ENCODE measurements at regions of chr5 and their contacts with region 1.

Region 1: GRCh38 chr5:96752341-96753016 is 55.3 kb downstream of the ERAP1 start:
- DNase-seq: peak in 1 of 2 experiments; percentile 71
- H3K4me3 ChIP-seq: no peak overlapping the region
- H3K4me3 Mint-ChIP-seq: no peak overlapping the region
- H3K27ac Mint-ChIP-seq: no peak overlapping the region
- H3K4me1 ChIP-seq: no peaks in the 10 kb centered on the region
- H3K4me1 Mint-ChIP-seq: no peaks in the 10 kb centered on the region
- H3K27me3 ChIP-seq: no peaks in the 10 kb centered on the region
- H3K27me3 Mint-ChIP-seq: no peaks in the 10 kb centered on the region
- CTCF ChIP-seq: peak; percentile 61 to 70

Region 2: DNA sequence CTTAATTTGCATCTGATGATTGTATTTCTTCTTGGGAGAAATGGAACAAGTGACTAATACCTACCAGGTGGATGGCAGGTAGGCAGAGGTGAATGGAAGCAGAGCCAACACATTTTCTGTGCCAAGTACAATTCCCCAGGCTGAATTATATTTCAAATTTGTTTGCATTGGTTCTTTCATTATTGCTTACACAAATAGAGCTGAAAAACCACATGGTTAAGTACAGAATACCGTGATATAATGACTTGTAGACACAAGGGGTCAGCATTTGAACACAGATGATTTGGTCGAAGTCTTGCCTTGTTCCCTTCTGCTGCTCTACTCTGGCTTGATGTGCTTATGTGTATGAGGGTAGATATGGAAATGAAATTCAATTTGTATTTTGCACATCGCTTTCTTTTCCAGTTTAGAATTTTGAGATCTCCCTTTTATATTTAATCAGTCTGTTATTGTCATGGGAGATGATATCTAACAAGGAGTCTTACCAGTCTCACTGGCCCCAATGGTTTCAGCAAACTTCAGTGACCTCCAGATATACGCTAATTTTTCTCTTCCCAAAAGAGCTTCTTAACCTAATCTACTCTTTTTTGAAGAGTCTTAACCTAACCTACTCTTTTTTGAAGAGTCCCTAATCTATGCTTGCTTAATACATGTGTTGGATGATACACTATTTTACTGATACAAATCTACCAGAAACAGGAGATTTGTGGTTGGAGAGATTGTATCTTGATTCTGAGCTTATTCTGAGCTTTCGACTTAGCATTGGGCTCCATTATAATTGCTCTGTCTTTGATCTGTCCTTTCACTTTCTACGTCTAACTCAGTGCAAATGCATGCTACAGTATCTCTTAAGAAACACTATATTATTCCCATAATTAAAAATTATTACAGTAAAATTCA is 407.6 kb before region 1 on chr5:
- CTCF ChIA-PET with region 1: no interaction called
- POLR2A ChIA-PET with region 1: no interaction called
- intact Hi-C with region 1: loop called (anchors 10 kb)
- DNase-seq: peak in 1 of 2 experiments; percentile 60
- H3K4me3 ChIP-seq: no peak overlapping the region
- H3K4me3 Mint-ChIP-seq: no peak overlapping the region
- H3K27ac Mint-ChIP-seq: no peak overlapping the region
- H3K4me1 ChIP-seq: peaks cover 8% of the 10 kb centered on the region
- H3K4me1 Mint-ChIP-seq: no peaks in the 10 kb centered on the region
- H3K27me3 ChIP-seq: no peaks in the 10 kb centered on the region
- H3K27me3 Mint-ChIP-seq: no peaks in the 10 kb centered on the region
- CTCF ChIP-seq: peak; percentile 52 to 57

Region 3: GRCh38 chr5:96662725-96663513 is 89.6 kb before region 1 on chr5:
- CTCF ChIA-PET with region 1: interaction called, 10 read pairs
- POLR2A ChIA-PET with region 1: no interaction called
- intact Hi-C with region 1: no loop called
- DNase-seq: peak; percentile 89 to 93
- H3K4me3 ChIP-seq: peak overlapping the region; percentile 90
- H3K4me3 Mint-ChIP-seq: peak overlapping the region; percentile 81
- H3K27ac Mint-ChIP-seq: peak overlapping the region; percentile 86
- H3K4me1 ChIP-seq: peaks cover 45% of the 10 kb centered on the region
- H3K4me1 Mint-ChIP-seq: peaks cover 34% of the 10 kb centered on the region
- H3K27me3 ChIP-seq: no peaks in the 10 kb centered on the region
- H3K27me3 Mint-ChIP-seq: no peaks in the 10 kb centered on the region
- CTCF ChIP-seq: peak in 1 of 2 experiments; percentile 3

Region 4: DNA sequence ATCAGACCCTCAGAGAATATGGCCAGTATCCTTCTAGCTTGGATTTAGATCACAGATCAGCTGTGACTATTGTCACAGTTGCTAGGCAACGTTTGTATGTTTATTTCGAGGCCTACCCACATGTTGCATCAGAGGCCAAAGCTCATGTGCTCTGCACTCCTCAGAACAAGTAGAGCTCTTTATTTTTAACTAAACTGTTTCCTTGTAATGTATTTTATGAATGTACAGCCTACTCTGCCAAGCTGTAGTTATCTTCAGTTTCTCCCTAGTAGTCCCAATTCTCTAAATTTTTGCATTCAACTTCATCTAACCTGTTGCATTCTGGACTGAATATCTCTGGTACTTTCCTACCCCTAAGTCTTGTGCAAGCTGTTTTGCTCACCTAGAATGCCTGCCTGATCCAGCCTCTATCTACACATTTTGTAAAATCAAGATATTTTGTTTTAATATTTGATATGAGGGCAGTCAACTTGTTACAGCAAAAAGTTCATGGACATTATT is 37.5 kb before region 1 on chr5:
- CTCF ChIA-PET with region 1: interaction called, 12 read pairs
- POLR2A ChIA-PET with region 1: no interaction called
- intact Hi-C with region 1: no loop called
- DNase-seq: peak; percentile 72 to 83
- H3K4me3 ChIP-seq: no peak overlapping the region
- H3K4me3 Mint-ChIP-seq: peak overlapping the region; percentile 34
- H3K27ac Mint-ChIP-seq: peak overlapping the region; percentile 92
- H3K4me1 ChIP-seq: peaks cover 36% of the 10 kb centered on the region
- H3K4me1 Mint-ChIP-seq: peaks cover 53% of the 10 kb centered on the region
- H3K27me3 ChIP-seq: no peaks in the 10 kb centered on the region
- H3K27me3 Mint-ChIP-seq: no peaks in the 10 kb centered on the region
- CTCF ChIP-seq: no peak

Region 5: DNA sequence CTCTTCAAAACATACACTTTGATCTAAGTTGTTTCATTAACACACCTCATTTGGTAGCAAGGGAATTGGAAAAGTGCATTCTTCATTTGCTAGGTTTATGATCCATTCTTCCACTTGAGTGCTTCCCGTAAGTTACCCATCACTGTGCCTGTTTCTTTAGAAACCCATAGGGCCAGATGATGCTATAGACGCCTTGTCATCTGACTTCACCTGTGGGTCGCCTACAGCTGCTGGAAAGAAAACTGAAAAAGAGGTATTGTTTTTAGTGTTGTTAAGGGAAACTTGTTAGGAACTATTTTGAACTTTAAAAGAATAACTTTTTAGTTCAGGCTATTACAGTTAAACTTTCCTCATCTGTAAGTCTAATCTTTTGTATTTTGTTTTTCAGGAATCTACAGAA is 11.4 kb before region 1 on chr5:
- CTCF ChIA-PET with region 1: interaction called, 11 read pairs
- POLR2A ChIA-PET with region 1: no interaction called
- intact Hi-C with region 1: no loop called
- DNase-seq: no peak
- H3K4me3 ChIP-seq: no peak overlapping the region
- H3K4me3 Mint-ChIP-seq: no peak overlapping the region
- H3K27ac Mint-ChIP-seq: no peak overlapping the region
- H3K4me1 ChIP-seq: peaks cover 18% of the 10 kb centered on the region
- H3K4me1 Mint-ChIP-seq: peaks cover 25% of the 10 kb centered on the region
- H3K27me3 ChIP-seq: no peaks in the 10 kb centered on the region
- H3K27me3 Mint-ChIP-seq: no peaks in the 10 kb centered on the region
- CTCF ChIP-seq: no peak

Region 6: DNA sequence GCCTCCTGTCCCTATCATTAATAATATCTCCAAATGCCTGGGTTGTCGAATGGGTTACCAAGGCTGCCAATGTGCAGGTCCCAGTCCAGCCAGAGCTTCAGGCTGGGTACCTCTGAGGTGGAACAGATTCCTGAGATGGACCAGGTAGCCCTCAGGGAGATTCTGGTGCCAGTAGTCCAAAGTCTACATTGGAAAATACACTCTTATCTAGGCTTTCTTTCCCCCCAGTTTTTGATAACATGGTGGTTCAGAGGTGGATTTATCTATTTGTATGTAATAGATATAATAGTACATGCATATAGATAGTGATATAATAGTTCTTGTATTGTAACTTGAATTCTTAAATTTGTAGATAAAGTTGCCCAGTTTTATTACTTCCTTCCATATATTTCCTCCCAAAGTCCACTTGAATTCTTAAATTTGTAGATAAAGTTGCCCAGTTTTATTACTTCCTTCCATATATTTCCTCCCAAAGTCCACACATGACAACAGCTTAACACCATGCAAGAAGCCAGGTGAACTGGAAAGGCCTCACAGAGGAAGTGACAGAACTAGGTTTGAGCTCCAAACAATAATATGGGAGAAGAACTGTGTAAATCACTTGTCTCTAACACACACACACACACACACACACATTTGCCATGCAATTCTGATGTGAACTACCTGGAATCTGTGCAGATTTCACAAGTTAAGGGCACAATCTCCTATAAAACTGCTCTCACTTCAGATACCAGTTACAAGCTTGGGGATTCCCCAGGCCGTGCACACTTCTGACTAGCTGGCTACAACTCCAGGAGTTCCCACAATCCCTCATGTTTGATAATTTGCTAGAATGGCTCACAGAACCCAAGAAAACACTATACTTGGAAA is 86.0 kb after region 1 on chr5:
- CTCF ChIA-PET with region 1: no interaction called
- POLR2A ChIA-PET with region 1: no interaction called
- intact Hi-C with region 1: no loop called
- DNase-seq: no peak
- H3K4me3 ChIP-seq: no peak overlapping the region
- H3K4me3 Mint-ChIP-seq: no peak overlapping the region
- H3K27ac Mint-ChIP-seq: no peak overlapping the region
- H3K4me1 ChIP-seq: peaks cover 21% of the 10 kb centered on the region; the same call in 1 of the 2 replicates
- H3K4me1 Mint-ChIP-seq: no peaks in the 10 kb centered on the region
- H3K27me3 ChIP-seq: no peaks in the 10 kb centered on the region
- H3K27me3 Mint-ChIP-seq: no peaks in the 10 kb centered on the region
- CTCF ChIP-seq: no peak

Region 7: DNA sequence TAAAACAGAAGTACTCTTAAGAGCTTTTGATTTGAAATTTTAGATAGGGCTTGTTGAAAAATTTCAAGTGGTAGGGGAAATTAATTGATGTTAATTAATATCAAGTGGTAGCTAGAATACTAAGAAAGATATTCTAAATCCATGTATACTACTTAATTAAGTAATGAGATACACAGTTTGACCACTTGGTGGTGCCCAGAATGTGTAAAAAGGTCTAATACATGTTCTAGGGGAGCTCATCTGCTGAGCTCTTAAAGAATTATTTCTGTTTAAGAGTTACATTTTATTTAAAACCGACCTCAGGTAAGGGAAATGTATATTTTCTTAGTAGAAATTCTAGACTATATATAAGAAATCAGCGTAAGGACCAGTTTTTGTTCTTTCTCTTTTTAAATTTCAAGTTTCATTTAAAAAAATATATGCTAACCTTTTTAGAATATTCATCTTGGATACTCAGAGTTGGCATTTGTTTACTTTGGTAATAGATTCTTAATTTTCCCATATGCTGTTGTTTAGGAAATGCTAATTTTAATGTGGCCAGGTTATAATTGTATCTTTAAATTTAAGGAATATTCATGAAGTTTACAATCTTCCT is 244.9 kb after region 1 on chr5:
- CTCF ChIA-PET with region 1: no interaction called
- POLR2A ChIA-PET with region 1: no interaction called
- intact Hi-C with region 1: loop called (anchors 10 kb)
- DNase-seq: peak in 1 of 2 experiments; percentile 32
- H3K4me3 ChIP-seq: no peak overlapping the region
- H3K4me3 Mint-ChIP-seq: no peak overlapping the region
- H3K27ac Mint-ChIP-seq: no peak overlapping the region
- H3K4me1 ChIP-seq: peaks cover 4% of the 10 kb centered on the region
- H3K4me1 Mint-ChIP-seq: peaks cover 18% of the 10 kb centered on the region
- H3K27me3 ChIP-seq: no peaks in the 10 kb centered on the region
- H3K27me3 Mint-ChIP-seq: no peaks in the 10 kb centered on the region
- CTCF ChIP-seq: peak; percentile 47 to 49

Region 8: DNA sequence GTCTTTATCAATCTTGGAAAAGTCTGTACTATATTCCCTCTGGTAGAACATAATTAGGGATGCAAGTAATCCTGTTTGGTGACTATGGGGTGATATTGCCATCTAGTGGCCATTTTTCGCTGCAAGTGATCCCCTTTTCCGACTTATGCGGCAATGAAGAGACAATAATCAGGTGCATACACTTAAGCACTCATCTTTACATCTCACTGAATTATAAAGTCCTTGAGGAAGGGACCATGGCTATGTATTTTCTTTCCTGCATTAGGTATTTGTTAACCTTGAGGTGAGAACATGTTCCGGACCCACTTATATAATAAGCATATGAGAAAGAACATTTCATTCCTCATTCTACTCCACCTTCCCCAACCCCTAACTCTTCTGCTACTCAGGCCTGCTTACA is 409.6 kb after region 1 on chr5:
- CTCF ChIA-PET with region 1: interaction called, 3 read pairs
- POLR2A ChIA-PET with region 1: no interaction called
- intact Hi-C with region 1: loop called (anchors 1 kb)
- DNase-seq: peak; percentile 70 to 78
- H3K4me3 ChIP-seq: no peak overlapping the region
- H3K4me3 Mint-ChIP-seq: no peak overlapping the region
- H3K27ac Mint-ChIP-seq: no peak overlapping the region
- H3K4me1 ChIP-seq: peaks cover 14% of the 10 kb centered on the region
- H3K4me1 Mint-ChIP-seq: peaks cover 5% of the 10 kb centered on the region
- H3K27me3 ChIP-seq: no peaks in the 10 kb centered on the region
- H3K27me3 Mint-ChIP-seq: no peaks in the 10 kb centered on the region
- CTCF ChIP-seq: peak; percentile 85 to 89

Region 9: DNA sequence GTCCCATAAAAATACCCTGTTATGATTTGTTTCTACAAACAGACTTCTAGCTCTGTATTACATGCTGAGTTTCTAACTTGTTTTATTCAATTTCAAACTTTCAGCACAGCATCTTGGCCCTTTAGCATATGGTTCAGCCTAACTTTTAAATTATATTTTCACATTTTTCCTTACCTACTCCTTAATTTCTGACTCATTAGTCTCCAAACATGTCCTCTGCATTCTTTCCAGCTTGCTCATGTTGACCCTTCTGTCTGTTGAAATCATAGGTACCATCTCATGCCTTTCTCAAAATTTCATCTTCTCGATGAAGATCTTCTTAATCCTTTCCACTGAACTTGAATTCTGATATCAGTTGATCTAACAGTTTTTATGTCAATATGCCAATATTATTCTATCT is 631.5 kb after region 1 on chr5:
- CTCF ChIA-PET with region 1: no interaction called
- POLR2A ChIA-PET with region 1: no interaction called
- intact Hi-C with region 1: no loop called
- DNase-seq: no peak
- H3K4me3 ChIP-seq: no peak overlapping the region
- H3K4me3 Mint-ChIP-seq: no peak overlapping the region
- H3K27ac Mint-ChIP-seq: no peak overlapping the region
- H3K4me1 ChIP-seq: no peaks in the 10 kb centered on the region
- H3K4me1 Mint-ChIP-seq: no peaks in the 10 kb centered on the region
- H3K27me3 ChIP-seq: no peaks in the 10 kb centered on the region; the same call in 1 of the 2 replicates
- H3K27me3 Mint-ChIP-seq: no peaks in the 10 kb centered on the region
- CTCF ChIP-seq: no peak

Measured in Caco-2 (cell line).